Pancreas (tissue), 10 donors: ENCODE measurements at regions of chr19 and their contacts with region 1.

Region 1: GRCh38 chr19:984165-984967 is at the start of gene WDR18:
- DNase-seq: peak; percentile 91 to 98 (median 94)
- ATAC-seq: peak; percentile 93 to 96 (median 96)
- H3K4me3 ChIP-seq: peak within 1 kb of the TSS; percentile 76 to 96 (median 91)
- H3K27ac ChIP-seq: peak within 1 kb of the TSS; percentile 65 to 81 (median 71)
- H3K4me1 ChIP-seq: peaks cover 0 to 15% (median 4%) of the 10 kb centered on the region in 3 donors
- H3K27me3 ChIP-seq: no peaks in the 10 kb centered on the region
- CTCF ChIP-seq: peak in 1 of 4 donors; percentile 20
- total RNA-seq, gene WDR18: 12.3 to 26.2 (median 19.0) TPM

Region 2: DNA sequence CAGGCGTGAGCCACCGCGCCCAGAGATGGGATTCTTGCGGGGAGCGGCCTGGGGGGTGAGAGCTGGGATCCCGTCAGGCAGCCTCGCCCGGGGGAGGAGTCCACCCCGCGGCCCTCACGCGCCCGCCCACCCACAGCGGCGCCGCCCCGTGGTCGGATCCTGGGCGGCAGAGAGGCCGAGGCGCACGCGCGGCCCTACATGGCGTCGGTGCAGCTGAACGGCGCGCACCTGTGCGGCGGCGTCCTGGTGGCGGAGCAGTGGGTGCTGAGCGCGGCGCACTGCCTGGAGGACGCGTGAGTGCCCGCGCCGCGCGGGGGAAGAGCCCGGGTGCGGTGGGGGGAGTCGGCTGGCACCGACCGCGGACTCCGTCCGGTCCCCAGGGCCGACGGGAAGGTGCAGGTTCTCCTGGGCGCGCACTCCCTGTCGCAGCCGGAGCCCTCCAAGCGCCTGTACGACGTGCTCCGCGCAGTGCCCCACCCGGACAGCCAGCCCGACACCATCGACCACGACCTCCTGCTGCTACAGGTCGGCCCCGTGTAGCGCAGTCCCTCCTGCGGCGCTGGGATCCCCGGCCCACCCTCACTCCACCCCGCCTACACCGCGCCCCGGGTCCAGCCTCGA is 123.8 kb before region 1 on chr19:
- intact Hi-C with region 1: loop called in 1 of 3 experiments (anchors 10 kb)
- DNase-seq: peak in 4 of 6 donors; percentile 65 to 83 (median 74)
- ATAC-seq: peak; percentile 42 to 60 (median 50)
- H3K4me3 ChIP-seq: peak overlapping the region in 3 of 4 donors; percentile 18 to 42 (median 28)
- H3K27ac ChIP-seq: no peak overlapping the region
- H3K4me1 ChIP-seq: peaks cover 0 to 3% (median 0%) of the 10 kb centered on the region in 3 donors
- H3K27me3 ChIP-seq: no peaks in the 10 kb centered on the region
- CTCF ChIP-seq: no peak

Region 3: DNA sequence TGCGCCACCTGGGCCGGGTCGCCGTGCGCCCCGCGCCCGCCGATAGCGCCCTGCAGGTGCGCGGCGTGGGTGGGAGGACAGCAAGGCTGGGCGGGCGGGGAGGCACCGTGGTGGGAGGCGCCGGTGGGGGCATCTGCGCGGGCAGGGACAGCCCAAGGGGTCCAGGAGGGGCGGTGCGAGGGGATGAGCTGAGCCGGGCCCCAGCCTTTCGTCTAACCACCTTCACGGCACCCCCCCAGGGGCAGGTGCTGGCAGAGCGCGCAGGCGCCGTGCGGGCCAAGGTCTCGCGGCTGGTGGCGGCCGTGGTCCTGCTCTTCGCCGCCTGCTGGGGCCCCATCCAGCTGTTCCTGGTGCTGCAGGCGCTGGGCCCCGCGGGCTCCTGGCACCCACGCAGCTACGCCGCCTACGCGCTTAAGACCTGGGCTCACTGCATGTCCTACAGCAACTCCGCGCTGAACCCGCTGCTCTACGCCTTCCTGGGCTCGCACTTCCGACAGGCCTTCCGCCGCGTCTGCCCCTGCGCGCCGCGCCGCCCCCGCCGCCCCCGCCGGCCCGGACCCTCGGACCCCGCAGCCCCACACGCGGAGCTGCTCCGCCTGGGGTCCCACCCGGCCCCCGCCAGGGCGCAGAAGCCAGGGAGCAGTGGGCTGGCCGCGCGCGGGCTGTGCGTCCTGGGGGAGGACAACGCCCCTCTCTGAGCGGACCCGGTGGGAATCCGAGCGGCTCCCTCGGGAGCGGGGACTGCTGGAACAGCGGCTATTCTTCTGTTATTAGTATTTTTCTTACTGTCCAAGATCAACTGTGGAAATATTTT is 64.1 kb before region 1 on chr19:
- intact Hi-C with region 1: loop called (anchors 2 to 10 kb)
- DNase-seq: peak in 4 of 6 donors; percentile 56 to 88 (median 64)
- ATAC-seq: peak; percentile 10 to 35 (median 28)
- H3K4me3 ChIP-seq: peak overlapping the region in 3 of 4 donors; percentile 7 to 31 (median 11)
- H3K27ac ChIP-seq: no peak overlapping the region
- H3K4me1 ChIP-seq: peaks cover 13 to 18% (median 15%) of the 10 kb centered on the region in 3 donors
- H3K27me3 ChIP-seq: peaks cover 0 to 10% (median 2%) of the 10 kb centered on the region in 4 donors
- CTCF ChIP-seq: no peak

Region 4: GRCh38 chr19:925526-926322 is 58.6 kb before region 1 on chr19 and contains the start of gene ARID3A:
- intact Hi-C with region 1: loop called (anchors 2 to 10 kb)
- DNase-seq: peak; percentile 74 to 90 (median 80)
- ATAC-seq: peak; percentile 83 to 86 (median 84)
- H3K4me3 ChIP-seq: peak within 1 kb of the TSS; percentile 49 to 93 (median 85)
- H3K27ac ChIP-seq: peak within 1 kb of the TSS; percentile 70 to 79 (median 76)
- H3K4me1 ChIP-seq: peaks cover 5% of the 10 kb centered on the region in 3 donors
- H3K27me3 ChIP-seq: peaks cover 0 to 1% (median under 1%) of the 10 kb centered on the region in 4 donors
- CTCF ChIP-seq: no peak
- total RNA-seq, gene ARID3A: 6.5 to 8.5 (median 7.3) TPM

Region 5: DNA sequence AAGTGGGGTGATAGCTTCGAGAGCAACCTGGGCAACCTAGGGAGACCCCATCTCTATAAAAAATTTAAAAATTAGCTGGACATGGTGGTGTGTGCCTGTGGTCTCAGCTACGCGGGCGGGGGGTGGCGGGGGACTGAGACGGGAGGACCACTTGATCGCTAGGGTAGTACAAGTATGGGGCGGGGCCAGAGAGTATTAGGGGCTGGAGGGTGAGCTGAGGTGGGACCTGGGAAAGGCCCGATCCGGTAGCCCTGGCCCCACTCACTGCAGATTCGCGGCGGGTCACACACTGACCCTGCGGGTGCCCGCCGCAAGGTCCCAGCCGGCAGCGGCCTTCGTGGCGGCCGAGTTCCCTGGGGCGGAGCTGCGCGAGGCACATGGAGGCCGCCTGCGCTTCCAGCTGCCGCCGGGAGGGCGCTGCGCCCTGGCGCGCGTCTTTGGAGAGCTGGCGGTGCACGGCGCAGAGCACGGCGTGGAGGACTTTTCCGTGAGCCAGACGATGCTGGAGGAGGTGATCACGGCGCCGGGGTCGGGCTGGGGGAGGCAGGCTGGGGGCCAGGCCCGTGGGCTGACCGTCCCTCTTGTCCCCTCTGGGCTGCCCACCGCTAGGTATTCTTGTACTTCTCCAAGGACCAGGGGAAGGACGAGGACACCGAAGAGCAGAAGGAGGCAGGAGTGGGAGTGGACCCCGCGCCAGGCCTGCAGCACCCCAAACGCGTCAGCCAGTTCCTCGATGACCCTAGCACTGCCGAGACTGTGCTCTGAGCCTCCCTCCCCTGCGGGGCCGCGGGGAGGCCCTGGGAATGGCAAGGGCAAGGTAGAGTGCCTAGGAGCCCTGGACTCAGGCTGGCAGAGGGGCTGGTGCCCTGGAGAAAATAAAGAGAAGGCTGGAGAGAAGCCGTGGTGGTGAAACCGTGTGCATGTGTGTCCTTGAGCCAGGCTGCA is 80.6 kb after region 1 on chr19:
- intact Hi-C with region 1: no loop called
- DNase-seq: peak in 4 of 6 donors; percentile 70 to 90 (median 80)
- ATAC-seq: peak; percentile 81 to 83 (median 82)
- H3K4me3 ChIP-seq: no peak overlapping the region
- H3K27ac ChIP-seq: no peak overlapping the region
- H3K4me1 ChIP-seq: peaks cover 0 to 10% (median 9%) of the 10 kb centered on the region in 3 donors
- H3K27me3 ChIP-seq: peaks cover 0 to 23% (median 2%) of the 10 kb centered on the region in 4 donors
- CTCF ChIP-seq: peak; percentile 63 to 90 (median 74)

Region 6: GRCh38 chr19:1154731-1155351 is 170.5 kb after region 1 on chr19:
- intact Hi-C with region 1: no loop called
- DNase-seq: peak in 5 of 6 donors; percentile 54 to 82 (median 65)
- ATAC-seq: peak; percentile 57 to 81 (median 76)
- H3K4me3 ChIP-seq: peak overlapping the region in 1 of 4 donors; percentile 30
- H3K27ac ChIP-seq: peak overlapping the region in 3 of 4 donors; percentile 31 to 82 (median 65)
- H3K4me1 ChIP-seq: peaks cover 0 to 8% (median 0%) of the 10 kb centered on the region in 3 donors
- H3K27me3 ChIP-seq: no peaks in the 10 kb centered on the region
- CTCF ChIP-seq: no peak